ENCODE measurements at regions of chr20 and their contacts with region 1.

Region 1: DNA sequence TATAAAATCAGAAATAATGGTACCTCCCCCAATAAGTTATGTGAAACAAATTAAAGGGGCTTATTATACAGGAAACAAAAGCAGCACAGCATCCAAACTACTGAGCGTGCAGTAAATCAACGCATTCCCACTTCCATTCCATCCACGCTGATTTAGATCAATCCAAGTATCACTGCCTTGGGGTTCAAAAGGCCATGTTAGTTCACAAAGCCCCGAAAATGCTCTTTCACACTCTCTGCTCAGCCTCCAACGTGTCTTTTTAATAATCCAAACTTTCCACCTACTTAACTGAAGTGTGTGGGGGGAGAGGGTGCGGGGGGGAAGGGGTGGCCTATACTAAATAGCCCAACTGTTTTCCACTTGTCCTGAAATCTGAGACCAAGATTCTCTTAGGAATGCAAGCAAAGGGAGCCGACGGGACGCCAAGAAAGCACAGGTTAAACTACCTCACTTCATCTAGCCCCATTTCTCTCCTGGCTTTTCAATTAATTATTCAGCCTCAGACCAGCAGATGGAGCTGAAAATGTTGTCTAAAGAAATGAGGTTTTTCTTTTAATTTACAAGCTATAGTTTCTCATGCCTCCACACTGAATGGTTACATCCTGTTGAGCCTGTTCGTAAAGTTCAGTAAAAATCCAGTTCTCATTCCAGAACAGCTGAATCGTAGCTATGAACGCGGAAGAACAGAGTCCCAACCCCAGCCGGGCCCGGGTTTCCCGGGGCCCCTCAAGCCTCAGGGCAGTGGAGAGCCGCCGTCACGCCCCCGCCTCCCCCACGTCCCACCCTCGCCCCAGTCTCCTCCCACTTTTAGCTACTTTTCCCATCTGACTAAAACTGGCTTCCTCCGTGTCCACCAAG is 1.0 kb upstream of the NXT1 start:
- DNase-seq: peak; percentile 79 to 86
- H3K4me3 ChIP-seq: peak overlapping the region; percentile 7 to 83 (median 21)
- H3K27ac ChIP-seq: peak overlapping the region; percentile 88 to 98 (median 97)
- H3K4me1 ChIP-seq: peaks cover 10 to 20% of the 10 kb centered on the region in 2 donors
- H3K27me3 ChIP-seq: no peaks in the 10 kb centered on the region
- CTCF ChIP-seq: peak in 4 of 6 experiments; percentile 36 to 61 (median 52)
- POLR2A ChIP-seq: no peak

Region 2: DNA sequence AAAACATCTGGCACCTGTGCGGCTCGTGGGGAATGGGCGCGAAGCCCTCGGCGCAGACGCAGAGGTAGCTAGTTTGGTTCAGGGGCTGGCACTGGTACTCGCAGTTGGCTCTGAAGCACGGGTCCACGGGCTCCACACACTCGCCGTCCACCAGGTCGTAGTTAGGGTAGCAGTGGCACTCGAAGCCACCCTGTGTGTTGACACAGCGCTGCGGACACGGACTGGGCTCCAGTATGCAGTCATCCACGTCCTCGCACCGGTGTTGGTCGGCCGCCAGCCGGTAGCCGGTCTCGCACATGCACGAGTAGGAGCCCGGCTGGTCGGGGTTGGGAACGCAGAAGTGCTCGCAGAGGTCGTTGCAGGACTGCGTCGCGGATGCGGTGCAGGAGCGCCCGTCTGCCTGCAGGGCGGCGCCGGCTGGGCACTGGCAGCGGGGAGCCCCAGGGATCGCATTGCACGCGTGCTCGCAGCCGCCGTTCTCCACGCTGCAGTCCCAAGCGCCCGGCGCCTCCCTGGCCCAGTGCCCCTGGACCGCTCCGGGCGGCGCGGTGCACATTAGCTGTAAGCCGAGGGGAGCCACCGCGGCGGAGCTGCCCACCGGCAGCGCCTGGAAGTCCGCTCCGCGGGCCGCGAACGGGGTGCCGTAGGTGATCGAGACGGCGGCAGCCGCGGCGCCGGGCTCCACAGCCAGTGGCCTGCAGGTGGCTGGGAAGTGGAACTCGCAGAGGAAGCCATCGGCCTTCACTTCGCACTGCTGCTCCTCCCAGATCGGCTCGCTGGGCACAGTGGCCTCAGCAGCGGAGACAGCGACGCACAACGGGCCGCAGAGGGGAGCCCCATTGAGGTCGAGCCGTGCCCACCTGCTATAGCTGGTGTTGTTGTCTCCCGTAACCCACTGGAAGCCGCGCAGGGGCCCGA is 301.0 kb before region 1 on chr20:
- intact Hi-C with region 1: loop called (anchors 10 kb)
- DNase-seq: peak; percentile 88 to 89
- H3K4me3 ChIP-seq: peak overlapping the region in 2 of 3 donors; percentile 29 to 53
- H3K27ac ChIP-seq: peak overlapping the region; percentile 57 to 88 (median 85)
- H3K4me1 ChIP-seq: peaks cover 24 to 47% of the 10 kb centered on the region in 2 donors
- H3K27me3 ChIP-seq: no peaks in the 10 kb centered on the region
- CTCF ChIP-seq: peak in 4 of 6 experiments; percentile 20 to 52 (median 34)
- POLR2A ChIP-seq: no peak

Region 3: GRCh38 chr20:23086056-23086566 is 263.5 kb before region 1 on chr20 and contains the start of gene CD93:
- intact Hi-C with region 1: no loop called
- DNase-seq: no peak
- H3K4me3 ChIP-seq: peak within 1 kb of the TSS in 1 of 3 donors; percentile 26
- H3K27ac ChIP-seq: peak within 1 kb of the TSS; percentile 77 to 85 (median 81)
- H3K4me1 ChIP-seq: peaks cover 0 to 12% of the 10 kb centered on the region in 2 donors
- H3K27me3 ChIP-seq: no peaks in the 10 kb centered on the region
- CTCF ChIP-seq: no peak
- POLR2A ChIP-seq: peak in 1 of 2 donors; percentile 18
- total RNA-seq, gene CD93: 13.6 to 53.8 (median 24.0) TPM